Activated CD4-positive, alpha-beta T cell treated with anti-CD3 and anti-CD28 coated beads, Interleukin-2, amount 10 ng/mL, durations not matched to agents 7 days and 5 days (primary cell): ENCODE measurements at regions of chr1 and their contacts with region 1.

Region 1: DNA sequence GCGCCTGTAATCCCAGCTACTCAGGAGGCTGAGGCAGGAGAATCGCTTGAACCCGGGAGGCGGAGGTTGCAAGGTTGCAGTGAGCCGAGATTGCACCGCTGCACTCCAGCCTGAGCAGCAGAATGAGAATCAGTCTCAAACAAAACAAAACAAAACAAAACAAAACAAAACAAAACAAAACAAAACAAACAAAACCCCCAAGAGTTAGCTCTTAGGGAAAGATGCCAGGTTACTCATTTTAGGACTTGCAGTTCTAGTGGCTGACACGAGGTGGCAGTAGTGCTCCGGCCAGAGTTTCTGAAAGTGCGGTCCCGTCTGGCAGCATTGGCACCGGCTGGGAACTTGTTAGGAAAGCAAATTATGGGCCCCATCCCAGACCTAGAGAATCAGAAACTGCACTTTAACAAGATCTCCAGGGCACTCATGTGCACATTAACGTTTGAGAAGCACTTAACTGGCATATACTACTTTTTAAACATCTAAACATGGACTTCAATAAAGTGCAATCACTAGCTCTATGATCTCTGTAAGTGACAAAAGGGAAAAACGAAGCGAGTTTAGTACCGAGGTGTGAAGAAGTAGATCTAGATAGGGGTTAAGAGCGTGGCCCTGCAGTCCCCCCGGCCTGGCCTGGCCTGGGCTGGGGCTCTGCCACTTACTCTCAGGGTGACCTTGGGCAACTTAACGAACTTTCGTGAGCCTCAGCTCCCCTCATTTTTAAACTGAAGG is 41.9 kb upstream of the TNFRSF1B start:
- DNase-seq: peak; percentile 79
- H3K4me3 Mint-ChIP-seq: no peak overlapping the region
- H3K27ac Mint-ChIP-seq: peak overlapping the region; percentile 1
- H3K4me1 Mint-ChIP-seq: peaks cover 51% of the 10 kb centered on the region
- H3K27me3 Mint-ChIP-seq: no peaks in the 10 kb centered on the region

Region 2: GRCh38 chr1:12113433-12114339 is 11.2 kb before region 1 on chr1:
- CTCF ChIA-PET with region 1: interaction called, 19 read pairs
- POLR2A ChIA-PET with region 1: interaction called, 4 read pairs
- DNase-seq: peak; percentile 37
- H3K4me3 Mint-ChIP-seq: no peak overlapping the region
- H3K27ac Mint-ChIP-seq: peak overlapping the region; percentile 80
- H3K4me1 Mint-ChIP-seq: peaks cover 22% of the 10 kb centered on the region
- H3K27me3 Mint-ChIP-seq: no peaks in the 10 kb centered on the region

Region 3: DNA sequence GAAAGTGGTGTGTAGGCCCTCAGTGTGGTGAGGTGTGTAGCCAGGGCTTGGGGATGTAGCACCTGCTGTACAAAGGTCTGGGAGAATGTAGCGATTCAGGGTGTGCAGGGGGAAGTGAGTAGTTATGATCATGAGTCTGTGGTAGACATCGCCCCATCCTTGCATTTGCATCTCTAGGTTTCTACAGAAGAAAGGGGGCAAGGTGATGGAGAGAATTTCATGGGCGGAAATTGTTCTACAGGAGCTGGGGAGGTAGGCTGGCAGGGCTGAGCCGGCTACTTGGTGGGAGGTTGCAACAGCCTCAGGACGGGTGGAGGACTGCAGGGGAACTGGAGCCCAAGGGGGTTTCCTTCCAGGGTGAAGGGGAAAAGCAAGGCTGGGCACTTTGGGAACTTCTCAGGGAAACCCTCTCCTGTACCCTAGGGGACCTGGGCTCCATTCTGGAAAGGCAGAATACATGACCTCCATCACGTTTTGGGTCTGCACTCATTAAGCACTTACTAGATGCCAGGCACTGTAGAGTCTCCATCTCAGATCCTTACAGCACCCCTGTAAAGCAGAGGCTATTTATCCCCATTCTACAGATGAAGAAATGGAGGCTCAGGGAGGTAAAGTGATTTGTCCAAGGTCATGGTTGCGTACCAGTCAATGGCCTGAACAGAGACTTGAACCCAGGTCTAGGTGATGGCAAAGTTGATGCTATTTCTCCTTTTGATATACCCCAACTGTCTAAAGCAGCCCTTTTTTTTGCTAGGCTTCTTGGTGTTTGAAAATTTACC is 27.4 kb after region 1 on chr1:
- CTCF ChIA-PET with region 1: interaction called, 23 read pairs
- POLR2A ChIA-PET with region 1: interaction called, 4 read pairs
- DNase-seq: no peak
- H3K4me3 Mint-ChIP-seq: no peak overlapping the region
- H3K27ac Mint-ChIP-seq: peak overlapping the region; percentile 99
- H3K4me1 Mint-ChIP-seq: peaks cover 88% of the 10 kb centered on the region
- H3K27me3 Mint-ChIP-seq: no peaks in the 10 kb centered on the region

Region 4: DNA sequence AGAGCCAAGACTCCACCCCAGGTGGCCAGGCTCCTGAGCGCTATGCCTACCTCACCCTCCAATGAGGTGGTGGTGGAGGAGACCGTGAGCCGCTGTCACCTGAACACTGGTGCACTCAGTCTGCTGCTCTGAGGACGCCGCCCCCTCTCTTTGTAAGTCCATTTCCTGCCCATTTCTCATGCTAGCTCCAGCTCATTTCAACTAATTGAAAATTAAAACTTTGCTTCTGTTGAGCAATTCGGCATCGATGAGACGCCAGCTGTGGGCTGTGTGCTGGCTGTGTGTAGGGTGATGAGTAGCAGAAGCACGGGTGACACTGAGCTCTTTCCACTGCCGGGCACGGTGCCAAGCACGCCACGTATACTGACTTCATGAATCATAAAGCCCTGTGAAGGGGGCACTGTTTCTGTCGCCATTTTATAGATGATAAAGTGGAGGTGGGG is 53.2 kb after region 1 on chr1:
- CTCF ChIA-PET with region 1: interaction called, 27 read pairs
- POLR2A ChIA-PET with region 1: no interaction called
- DNase-seq: peak; percentile 84
- H3K4me3 Mint-ChIP-seq: peak overlapping the region; percentile 63
- H3K27ac Mint-ChIP-seq: peak overlapping the region; percentile 92
- H3K4me1 Mint-ChIP-seq: peaks cover 86% of the 10 kb centered on the region
- H3K27me3 Mint-ChIP-seq: no peaks in the 10 kb centered on the region

Region 5: GRCh38 chr1:12200208-12200607 is 75.4 kb after region 1 on chr1:
- CTCF ChIA-PET with region 1: interaction called, 91 read pairs
- POLR2A ChIA-PET with region 1: interaction called, 6 read pairs
- DNase-seq: no peak
- H3K4me3 Mint-ChIP-seq: no peak overlapping the region
- H3K27ac Mint-ChIP-seq: no peak overlapping the region
- H3K4me1 Mint-ChIP-seq: peaks cover 37% of the 10 kb centered on the region
- H3K27me3 Mint-ChIP-seq: no peaks in the 10 kb centered on the region

Region 6: DNA sequence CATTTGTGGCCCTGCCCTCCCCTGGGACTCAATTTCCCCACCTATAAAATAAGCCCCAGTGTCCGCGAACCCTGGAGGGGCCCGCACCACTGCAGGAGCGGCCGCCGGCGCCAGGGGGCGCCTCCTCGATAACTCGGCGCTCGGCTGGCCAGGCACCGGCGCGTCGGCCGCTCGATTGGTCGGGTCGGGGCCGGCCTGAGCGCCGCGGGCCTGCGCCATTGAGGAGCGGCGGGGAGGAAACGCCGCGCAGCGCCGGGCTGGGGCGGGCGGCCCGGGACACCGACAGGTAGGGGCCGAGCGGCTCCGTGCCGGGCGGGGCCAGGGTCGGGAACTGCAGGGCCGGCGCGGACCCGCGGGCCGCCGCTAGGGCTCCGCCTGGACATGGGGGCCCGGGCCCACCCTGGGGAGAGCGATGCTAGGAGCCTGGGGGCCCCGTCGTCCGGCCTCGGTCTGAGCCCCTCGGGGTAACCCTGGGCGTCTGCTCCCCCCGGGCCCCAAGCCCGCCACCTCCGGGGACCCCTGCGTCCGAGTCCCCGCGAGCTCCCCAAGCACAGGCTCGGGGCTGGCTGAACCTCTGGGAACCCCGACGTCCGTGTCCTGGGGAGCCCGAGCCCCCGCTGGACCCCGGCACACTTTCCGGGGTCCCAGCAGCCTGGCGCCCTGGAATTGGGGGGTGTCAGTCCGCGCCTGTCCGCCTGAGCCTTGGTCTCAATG is 105.1 kb after region 1 on chr1 and contains the start of gene VPS13D:
- CTCF ChIA-PET with region 1: interaction called, 13 read pairs
- POLR2A ChIA-PET with region 1: no interaction called
- DNase-seq: peak; percentile 87
- H3K4me3 Mint-ChIP-seq: peak within 1 kb of the TSS; percentile 82
- H3K27ac Mint-ChIP-seq: peak within 1 kb of the TSS; percentile 75
- H3K4me1 Mint-ChIP-seq: peaks cover 14% of the 10 kb centered on the region
- H3K27me3 Mint-ChIP-seq: peaks cover 8% of the 10 kb centered on the region
- total RNA-seq, gene VPS13D: 34.0 to 41.9 TPM